ENCODE measurements at regions of chr17 and their contacts with region 1.

Region 1: DNA sequence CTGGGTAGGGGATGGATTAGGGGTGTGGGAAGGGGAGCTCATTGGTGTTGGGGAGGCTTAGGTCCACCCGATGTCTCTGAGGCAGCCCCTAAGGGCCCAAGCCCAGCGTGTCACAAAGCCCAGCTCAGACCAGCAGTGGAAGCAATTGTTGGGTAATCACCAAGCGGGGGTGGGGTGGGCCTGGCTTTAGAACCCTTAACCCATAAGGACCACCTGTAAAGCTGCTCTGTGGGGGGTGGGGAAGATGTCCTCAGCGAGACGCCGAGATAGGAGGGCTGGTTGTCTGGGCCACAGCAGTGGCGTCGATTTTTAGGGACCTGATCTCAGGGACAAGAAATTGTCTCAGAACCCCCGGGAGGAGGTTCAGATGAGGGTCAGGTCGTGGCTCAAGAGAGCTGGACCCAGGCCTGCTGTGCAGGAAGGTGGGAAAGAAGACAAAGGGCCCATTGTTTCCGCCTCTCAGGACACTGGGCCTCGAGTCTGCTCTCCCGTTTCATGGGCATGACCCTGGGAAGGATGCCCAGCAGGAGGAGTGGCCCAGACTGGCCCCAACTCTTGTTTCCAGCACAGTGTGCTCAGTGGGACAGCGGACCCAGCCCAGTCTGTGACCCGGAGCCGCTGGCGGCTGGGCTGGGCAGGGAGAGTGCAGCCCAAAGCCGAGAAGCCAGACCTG is 15.9 kb downstream of the ST6GALNAC2 start:
- DNase-seq: peak; percentile 95

Region 2: GRCh38 chr17:76714822-76715495 is 145.2 kb after region 1 on chr17:
- in situ Hi-C with region 1: loop called (anchors 10 kb)
- DNase-seq: peak; percentile 82